ENCODE measurements at regions of chr16 and their contacts with region 1.

Region 1: GRCh38 chr16:75198135-75198600 is 8.8 kb downstream of the CTRB2 start:
- DNase-seq: peak in 1 of 14 experiments; percentile 17
- ATAC-seq: no peak
- H3K4me3 ChIP-seq: no peak overlapping the region
- H3K4me3 Mint-ChIP-seq: no peak overlapping the region
- H3K27ac ChIP-seq: no peak overlapping the region
- H3K27ac Mint-ChIP-seq: no peak overlapping the region
- H3K4me1 ChIP-seq: peaks cover 15% of the 10 kb centered on the region
- H3K4me1 Mint-ChIP-seq: peaks cover 33% of the 10 kb centered on the region
- H3K27me3 ChIP-seq: peaks cover 3 to 4% of the 10 kb centered on the region in 2 experiments
- H3K27me3 Mint-ChIP-seq: peaks cover 24% of the 10 kb centered on the region
- CTCF ChIP-seq: no peak

Region 2: GRCh38 chr16:75218256-75219070 is 20.3 kb after region 1 on chr16 and contains the start of gene CTRB1:
- CTCF ChIA-PET with region 1: interaction called, 3 read pairs
- POLR2A ChIA-PET with region 1: interaction called, 10 read pairs
- intact Hi-C with region 1: loop called (anchors 2 kb)
- DNase-seq: no peak
- ATAC-seq: no peak
- H3K4me3 ChIP-seq: peak within 1 kb of the TSS; percentile 41
- H3K4me3 Mint-ChIP-seq: peak within 1 kb of the TSS; percentile 87
- H3K27ac ChIP-seq: no peak within 1 kb of the TSS
- H3K27ac Mint-ChIP-seq: peak within 1 kb of the TSS; percentile 84
- H3K4me1 ChIP-seq: peaks cover 8% of the 10 kb centered on the region
- H3K4me1 Mint-ChIP-seq: peaks cover 11% of the 10 kb centered on the region
- H3K27me3 ChIP-seq: no peaks in the 10 kb centered on the region
- H3K27me3 Mint-ChIP-seq: no peaks in the 10 kb centered on the region
- CTCF ChIP-seq: no peak
- total RNA-seq, gene CTRB1: not detected

Region 3: DNA sequence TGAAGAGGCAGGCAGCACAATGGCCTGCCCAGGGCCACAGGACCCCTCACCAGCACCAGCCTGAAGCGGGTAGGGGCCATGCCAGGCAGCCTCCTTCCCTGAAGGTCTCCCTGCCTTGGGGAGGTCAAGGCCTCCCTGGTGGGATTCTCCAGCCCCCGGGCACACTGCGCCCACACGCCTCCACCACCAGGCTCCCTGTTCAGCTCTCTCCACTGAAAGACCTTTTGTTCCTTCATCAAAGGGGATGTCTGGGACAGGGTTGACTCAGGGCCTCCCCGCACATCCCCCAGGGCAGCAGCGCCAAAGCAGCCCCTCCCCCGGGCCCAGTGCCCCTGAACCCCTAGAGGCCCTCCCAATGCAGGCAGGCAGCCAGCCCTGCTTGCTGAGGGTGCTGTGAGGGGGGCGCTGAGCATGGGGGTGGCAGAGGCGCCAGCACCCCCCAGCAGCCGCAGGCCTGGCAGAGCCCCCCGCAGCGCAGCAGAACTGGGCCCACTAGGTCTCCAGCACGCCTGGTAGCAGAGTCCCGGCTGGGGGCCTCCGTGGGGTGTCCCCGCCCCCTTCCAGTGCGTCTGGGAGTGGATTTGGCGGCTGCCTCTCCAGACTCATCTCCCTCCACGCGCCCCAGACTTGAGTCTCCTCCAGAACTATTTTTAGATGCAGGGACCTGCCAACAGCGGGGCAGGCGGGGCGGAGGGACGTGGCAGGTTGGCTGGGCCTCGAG is 40.1 kb after region 1 on chr16:
- CTCF ChIA-PET with region 1: interaction called, 15 read pairs
- POLR2A ChIA-PET with region 1: interaction called, 5 read pairs
- intact Hi-C with region 1: loop called (anchors 5 kb)
- DNase-seq: no peak
- ATAC-seq: no peak
- H3K4me3 ChIP-seq: no peak overlapping the region
- H3K4me3 Mint-ChIP-seq: no peak overlapping the region
- H3K27ac ChIP-seq: no peak overlapping the region
- H3K27ac Mint-ChIP-seq: no peak overlapping the region
- H3K4me1 ChIP-seq: peaks cover 9% of the 10 kb centered on the region
- H3K4me1 Mint-ChIP-seq: no peaks in the 10 kb centered on the region
- H3K27me3 ChIP-seq: no peaks in the 10 kb centered on the region
- H3K27me3 Mint-ChIP-seq: no peaks in the 10 kb centered on the region
- CTCF ChIP-seq: no peak

Region 4: GRCh38 chr16:75251280-75252048 is 53.3 kb after region 1 on chr16 and contains the start of gene BCAR1:
- CTCF ChIA-PET with region 1: no interaction called
- POLR2A ChIA-PET with region 1: no interaction called
- intact Hi-C with region 1: no loop called
- DNase-seq: peak in 4 of 14 experiments; percentile 9 to 34 (median 23)
- ATAC-seq: peak; percentile 34
- H3K4me3 ChIP-seq: peak within 1 kb of the TSS; percentile 10
- H3K4me3 Mint-ChIP-seq: peak within 1 kb of the TSS; percentile 82
- H3K27ac ChIP-seq: no peak within 1 kb of the TSS
- H3K27ac Mint-ChIP-seq: no peak within 1 kb of the TSS
- H3K4me1 ChIP-seq: peaks cover 13% of the 10 kb centered on the region
- H3K4me1 Mint-ChIP-seq: peaks cover 5% of the 10 kb centered on the region
- H3K27me3 ChIP-seq: peaks cover 44 to 59% of the 10 kb centered on the region in 2 experiments
- H3K27me3 Mint-ChIP-seq: peaks cover 40% of the 10 kb centered on the region
- CTCF ChIP-seq: no peak
- total RNA-seq, gene BCAR1: 0.08 to 0.17 TPM

Region 5: GRCh38 chr16:75385507-75386152 is 187.5 kb after region 1 on chr16:
- CTCF ChIA-PET with region 1: interaction called, 11 read pairs
- POLR2A ChIA-PET with region 1: interaction called, 11 read pairs
- intact Hi-C with region 1: loop called (anchors 1 kb)
- DNase-seq: peak in 3 of 14 experiments; percentile 68 to 82 (median 81)
- ATAC-seq: peak; percentile 60
- H3K4me3 ChIP-seq: no peak overlapping the region
- H3K4me3 Mint-ChIP-seq: no peak overlapping the region
- H3K27ac ChIP-seq: no peak overlapping the region
- H3K27ac Mint-ChIP-seq: no peak overlapping the region
- H3K4me1 ChIP-seq: peaks cover 14% of the 10 kb centered on the region
- H3K4me1 Mint-ChIP-seq: peaks cover 33% of the 10 kb centered on the region
- H3K27me3 ChIP-seq: no peaks in the 10 kb centered on the region
- H3K27me3 Mint-ChIP-seq: no peaks in the 10 kb centered on the region
- CTCF ChIP-seq: peak; percentile 86

Region 6: DNA sequence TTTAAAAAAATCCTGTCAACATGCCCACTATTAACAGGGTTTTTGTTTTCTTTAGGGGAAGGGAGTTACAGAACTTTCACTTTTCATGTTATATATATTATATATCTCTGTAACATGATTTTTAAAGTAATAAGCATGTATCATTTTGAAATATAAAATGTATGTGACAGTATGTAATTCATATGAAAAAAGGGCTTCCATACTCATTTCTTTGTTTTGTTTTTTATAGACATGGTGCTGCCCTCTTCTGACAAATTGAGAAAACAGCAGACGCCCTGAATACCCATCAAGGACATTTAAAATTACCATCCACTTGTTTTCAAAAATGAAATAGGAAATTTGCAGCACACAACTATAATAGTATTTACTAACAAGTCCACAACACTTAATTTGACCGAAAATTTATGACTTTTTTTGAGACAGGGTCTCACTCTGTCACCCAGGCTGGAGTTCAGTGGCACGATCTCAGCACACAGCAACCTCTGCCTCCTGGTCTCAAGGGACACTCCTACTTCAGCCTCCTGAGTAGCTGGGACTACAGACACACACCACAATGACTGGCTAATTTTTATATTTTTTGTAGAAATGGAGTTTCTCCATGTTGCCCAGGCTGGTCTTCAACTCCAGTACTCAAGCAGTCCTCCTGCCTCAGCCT is 204.8 kb after region 1 on chr16:
- CTCF ChIA-PET with region 1: interaction called, 5 read pairs
- POLR2A ChIA-PET with region 1: interaction called, 3 read pairs
- intact Hi-C with region 1: loop called (anchors 1 to 2 kb)
- DNase-seq: peak in 3 of 14 experiments; percentile 42 to 55 (median 54)
- ATAC-seq: peak; percentile 57
- H3K4me3 ChIP-seq: no peak overlapping the region
- H3K4me3 Mint-ChIP-seq: no peak overlapping the region
- H3K27ac ChIP-seq: no peak overlapping the region
- H3K27ac Mint-ChIP-seq: no peak overlapping the region
- H3K4me1 ChIP-seq: no peaks in the 10 kb centered on the region
- H3K4me1 Mint-ChIP-seq: peaks cover 4% of the 10 kb centered on the region
- H3K27me3 ChIP-seq: no peaks in the 10 kb centered on the region
- H3K27me3 Mint-ChIP-seq: no peaks in the 10 kb centered on the region
- CTCF ChIP-seq: peak; percentile 76

Region 7: GRCh38 chr16:75764154-75764768 is 566.1 kb after region 1 on chr16:
- CTCF ChIA-PET with region 1: interaction called, 4 read pairs
- POLR2A ChIA-PET with region 1: no interaction called
- intact Hi-C with region 1: loop called (anchors 1 kb)
- DNase-seq: peak; percentile 31 to 84 (median 44)
- ATAC-seq: peak; percentile 97
- H3K4me3 ChIP-seq: no peak overlapping the region
- H3K4me3 Mint-ChIP-seq: no peak overlapping the region
- H3K27ac ChIP-seq: no peak overlapping the region
- H3K27ac Mint-ChIP-seq: no peak overlapping the region
- H3K4me1 ChIP-seq: peaks cover 6% of the 10 kb centered on the region
- H3K4me1 Mint-ChIP-seq: no peaks in the 10 kb centered on the region
- H3K27me3 ChIP-seq: peaks cover 0 to 3% of the 10 kb centered on the region in 2 experiments
- H3K27me3 Mint-ChIP-seq: no peaks in the 10 kb centered on the region
- CTCF ChIP-seq: peak; percentile 82

Region 8: DNA sequence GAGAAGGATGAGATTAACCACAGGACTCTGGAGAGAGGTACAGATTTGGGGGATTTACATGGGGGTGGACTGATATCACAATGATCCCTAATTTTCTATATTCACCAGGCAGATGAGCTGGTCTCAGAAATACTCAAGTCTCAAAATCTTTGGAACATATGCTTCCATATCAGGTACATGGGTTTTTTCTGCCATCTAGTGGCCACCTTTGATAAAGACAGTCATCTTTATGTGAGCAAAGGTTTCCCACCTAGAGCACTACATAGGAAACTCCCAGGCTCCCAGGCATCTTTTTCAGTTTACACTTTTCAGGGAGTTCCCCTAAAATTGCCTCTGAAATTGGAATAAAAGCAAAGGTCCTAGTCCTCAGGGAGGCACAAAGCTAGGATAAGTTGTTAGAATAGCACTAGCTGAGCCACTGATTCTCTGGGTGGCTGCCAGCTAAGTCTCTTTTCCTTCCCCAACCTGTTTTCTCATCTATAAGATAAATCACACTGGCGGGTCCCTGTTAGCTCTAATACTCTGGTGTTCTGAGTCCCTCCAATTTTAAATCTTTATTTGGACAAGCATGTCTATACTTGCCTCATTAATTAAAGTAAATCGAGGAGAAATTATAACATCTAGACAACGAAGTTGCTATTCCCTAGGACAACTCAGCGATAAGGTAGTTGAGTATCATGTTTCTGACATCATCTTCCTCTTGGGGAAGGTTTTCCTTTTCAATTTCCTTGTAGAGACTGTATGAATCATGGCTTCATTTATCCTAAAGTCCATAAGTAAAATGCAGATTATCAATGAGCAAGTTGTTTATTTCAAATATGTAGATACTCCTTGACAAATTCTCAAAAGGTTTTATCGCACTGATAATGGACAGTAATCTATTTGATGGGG is 1973.8 kb after region 1 on chr16:
- CTCF ChIA-PET with region 1: no interaction called
- POLR2A ChIA-PET with region 1: no interaction called
- intact Hi-C with region 1: loop called (anchors 2 to 10 kb)
- DNase-seq: peak in 4 of 14 experiments; percentile 33 to 71 (median 62)
- ATAC-seq: peak; percentile 57
- H3K4me3 ChIP-seq: no peak overlapping the region
- H3K4me3 Mint-ChIP-seq: no peak overlapping the region
- H3K27ac ChIP-seq: no peak overlapping the region
- H3K27ac Mint-ChIP-seq: no peak overlapping the region
- H3K4me1 ChIP-seq: no peaks in the 10 kb centered on the region
- H3K4me1 Mint-ChIP-seq: no peaks in the 10 kb centered on the region
- H3K27me3 ChIP-seq: peaks cover 5 to 39% of the 10 kb centered on the region in 2 experiments
- H3K27me3 Mint-ChIP-seq: peaks cover 77% of the 10 kb centered on the region
- CTCF ChIP-seq: peak; percentile 93